CD4-positive, alpha-beta T cell (primary cell): ENCODE measurements at regions of chr20 and their contacts with region 1.

Region 1: GRCh38 chr20:8633366-8633765 is 435.5 kb upstream of the PLCB4 start:
- DNase-seq: no peak
- ATAC-seq: no peak
- H3K4me3 ChIP-seq: no peak overlapping the region
- H3K4me3 Mint-ChIP-seq: no peak overlapping the region
- H3K27ac ChIP-seq: no peak overlapping the region
- H3K27ac Mint-ChIP-seq: no peak overlapping the region
- H3K4me1 ChIP-seq: no peaks in the 10 kb centered on the region
- H3K4me1 Mint-ChIP-seq: no peaks in the 10 kb centered on the region
- H3K27me3 ChIP-seq: no peaks in the 10 kb centered on the region
- H3K27me3 Mint-ChIP-seq: no peaks in the 10 kb centered on the region
- CTCF ChIP-seq: no peak

Region 2: DNA sequence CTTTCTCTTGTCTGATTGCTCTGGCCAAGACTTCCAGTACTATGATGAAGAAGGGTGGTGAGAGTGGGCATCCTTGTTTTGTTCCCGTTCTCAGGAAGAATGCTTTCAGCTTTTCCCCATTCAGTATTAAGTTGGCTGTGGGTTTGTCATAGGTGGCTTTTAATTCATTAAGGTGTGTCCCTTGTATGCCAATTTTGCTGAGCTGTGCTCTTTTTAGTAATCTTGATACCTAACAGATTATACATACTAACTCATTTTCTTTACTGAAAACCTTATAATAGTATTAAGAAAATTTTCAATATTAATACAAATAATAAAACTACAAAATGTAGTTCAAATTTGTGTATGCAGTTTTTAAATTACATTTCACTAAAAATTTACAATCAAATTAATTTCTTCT is 56.0 kb after region 1 on chr20:
- CTCF ChIA-PET with region 1: no interaction called
- POLR2A ChIA-PET with region 1: no interaction called
- intact Hi-C with region 1: loop called in 1 of 2 experiments (anchors 10 kb)
- DNase-seq: no peak
- ATAC-seq: no peak
- H3K4me3 ChIP-seq: no peak overlapping the region
- H3K4me3 Mint-ChIP-seq: no peak overlapping the region
- H3K27ac ChIP-seq: no peak overlapping the region
- H3K27ac Mint-ChIP-seq: no peak overlapping the region
- H3K4me1 ChIP-seq: no peaks in the 10 kb centered on the region
- H3K4me1 Mint-ChIP-seq: no peaks in the 10 kb centered on the region
- H3K27me3 ChIP-seq: no peaks in the 10 kb centered on the region
- H3K27me3 Mint-ChIP-seq: no peaks in the 10 kb centered on the region
- CTCF ChIP-seq: no peak